ENCODE measurements at regions of chr3 and their contacts with region 1.

Region 1: GRCh38 chr3:17158941-17159682 is 274.4 kb downstream of the PLCL2 start:
- DNase-seq: peak in 1 of 2 donors; percentile 45
- ATAC-seq: peak; percentile 31 to 65
- H3K4me3 ChIP-seq: no peak overlapping the region
- H3K27ac ChIP-seq: peak overlapping the region; percentile 61 to 79 (median 72)
- H3K4me1 ChIP-seq: peaks cover 21 to 33% of the 10 kb centered on the region in 2 donors
- H3K27me3 ChIP-seq: no peaks in the 10 kb centered on the region
- CTCF ChIP-seq: no peak
- POLR2A ChIP-seq: no peak

Region 2: GRCh38 chr3:17006132-17006852 is 152.8 kb before region 1 on chr3:
- in situ Hi-C with region 1: no loop called
- intact Hi-C with region 1: no loop called
- DNase-seq: no peak
- ATAC-seq: no peak
- H3K4me3 ChIP-seq: no peak overlapping the region
- H3K27ac ChIP-seq: peak overlapping the region in 1 of 4 donors; percentile 35
- H3K4me1 ChIP-seq: peaks cover 17 to 31% of the 10 kb centered on the region in 2 donors
- H3K27me3 ChIP-seq: no peaks in the 10 kb centered on the region
- CTCF ChIP-seq: no peak
- POLR2A ChIP-seq: no peak

Region 3: GRCh38 chr3:17179381-17180210 is 20.5 kb after region 1 on chr3:
- in situ Hi-C with region 1: no loop called
- intact Hi-C with region 1: loop called (anchors 2 kb)
- DNase-seq: peak in 1 of 2 donors; percentile 16
- ATAC-seq: peak; percentile 77 to 88
- H3K4me3 ChIP-seq: no peak overlapping the region
- H3K27ac ChIP-seq: no peak overlapping the region
- H3K4me1 ChIP-seq: peaks cover 24 to 31% of the 10 kb centered on the region in 2 donors
- H3K27me3 ChIP-seq: no peaks in the 10 kb centered on the region
- CTCF ChIP-seq: no peak
- POLR2A ChIP-seq: no peak

Measured in gastrocnemius medialis (tissue), 4 donors.